ENCODE measurements at regions of chr1 and their contacts with region 1.

Region 1: GRCh38 chr1:182699393-182700350 is 15.3 kb upstream of the RGS8 start:
- DNase-seq: peak; percentile 88
- ATAC-seq: peak; percentile 93
- H3K4me3 Mint-ChIP-seq: peak overlapping the region; percentile 65
- H3K27ac Mint-ChIP-seq: peak overlapping the region; percentile 95
- H3K4me1 Mint-ChIP-seq: peaks cover 74% of the 10 kb centered on the region
- H3K27me3 Mint-ChIP-seq: peaks cover 3% of the 10 kb centered on the region; the same call in 1 of the 2 replicates
- CTCF ChIP-seq: no peak

Region 2: GRCh38 chr1:182595641-182596240 is 103.9 kb before region 1 on chr1:
- CTCF ChIA-PET with region 1: interaction called, 48 read pairs
- POLR2A ChIA-PET with region 1: interaction called, 7 read pairs
- DNase-seq: peak; percentile 84
- ATAC-seq: peak; percentile 74
- H3K4me3 Mint-ChIP-seq: no peak overlapping the region
- H3K27ac Mint-ChIP-seq: no peak overlapping the region
- H3K4me1 Mint-ChIP-seq: peaks cover 7% of the 10 kb centered on the region; the same call in 1 of the 2 replicates
- H3K27me3 Mint-ChIP-seq: no peaks in the 10 kb centered on the region
- CTCF ChIP-seq: peak; percentile 70

Region 3: GRCh38 chr1:182604169-182605164 is 95.2 kb before region 1 on chr1 and contains the start of gene RGS16:
- CTCF ChIA-PET with region 1: interaction called, 48 read pairs
- POLR2A ChIA-PET with region 1: interaction called, 7 read pairs
- DNase-seq: peak; percentile 96
- ATAC-seq: peak; percentile 92
- H3K4me3 Mint-ChIP-seq: no peak within 1 kb of the TSS
- H3K27ac Mint-ChIP-seq: no peak within 1 kb of the TSS
- H3K4me1 Mint-ChIP-seq: peaks cover 11% of the 10 kb centered on the region
- H3K27me3 Mint-ChIP-seq: peaks cover 39% of the 10 kb centered on the region
- CTCF ChIP-seq: no peak
- total RNA-seq, gene RGS16: 9.9 to 17.8 TPM (median 10.2 TPM) in 3 replicates

Region 4: DNA sequence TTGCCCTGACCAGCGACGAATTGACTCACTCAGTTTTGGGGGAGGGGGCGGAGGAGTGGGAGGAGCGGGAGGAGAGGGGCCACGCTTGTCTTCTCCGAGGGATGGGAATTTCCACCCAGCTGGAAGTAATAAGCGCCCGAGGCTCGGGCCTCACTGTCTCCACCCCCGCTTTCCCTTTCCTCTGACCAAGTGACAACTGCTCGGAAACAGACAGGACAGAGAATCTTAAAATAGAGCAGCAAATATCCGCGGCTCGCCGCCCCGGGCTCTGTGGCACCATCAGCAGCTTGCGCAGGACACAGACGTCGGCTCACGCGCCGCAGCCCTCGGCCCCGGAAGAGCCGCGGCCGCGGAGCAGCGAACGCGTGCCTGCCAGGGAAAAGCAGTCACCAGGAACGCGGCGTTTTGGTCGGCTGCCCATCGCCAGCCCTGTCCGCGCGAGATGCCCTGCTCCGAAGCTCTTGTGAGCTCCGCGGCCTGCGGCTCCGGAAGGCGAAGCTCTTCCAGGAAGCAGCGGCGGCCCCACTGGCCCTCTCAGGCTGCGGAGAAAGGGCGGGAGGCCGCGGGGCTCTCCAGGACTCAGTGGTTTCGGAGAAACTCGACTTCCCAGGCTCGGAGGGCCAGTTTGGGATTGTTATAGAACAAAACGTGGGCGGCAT is 84.7 kb before region 1 on chr1:
- CTCF ChIA-PET with region 1: interaction called, 24 read pairs
- POLR2A ChIA-PET with region 1: interaction called, 15 read pairs
- DNase-seq: peak; percentile 55
- ATAC-seq: peak; percentile 24
- H3K4me3 Mint-ChIP-seq: peak overlapping the region; percentile 71
- H3K27ac Mint-ChIP-seq: peak overlapping the region; percentile 86
- H3K4me1 Mint-ChIP-seq: peaks cover 81% of the 10 kb centered on the region
- H3K27me3 Mint-ChIP-seq: peaks cover 67% of the 10 kb centered on the region
- CTCF ChIP-seq: no peak

Region 5: DNA sequence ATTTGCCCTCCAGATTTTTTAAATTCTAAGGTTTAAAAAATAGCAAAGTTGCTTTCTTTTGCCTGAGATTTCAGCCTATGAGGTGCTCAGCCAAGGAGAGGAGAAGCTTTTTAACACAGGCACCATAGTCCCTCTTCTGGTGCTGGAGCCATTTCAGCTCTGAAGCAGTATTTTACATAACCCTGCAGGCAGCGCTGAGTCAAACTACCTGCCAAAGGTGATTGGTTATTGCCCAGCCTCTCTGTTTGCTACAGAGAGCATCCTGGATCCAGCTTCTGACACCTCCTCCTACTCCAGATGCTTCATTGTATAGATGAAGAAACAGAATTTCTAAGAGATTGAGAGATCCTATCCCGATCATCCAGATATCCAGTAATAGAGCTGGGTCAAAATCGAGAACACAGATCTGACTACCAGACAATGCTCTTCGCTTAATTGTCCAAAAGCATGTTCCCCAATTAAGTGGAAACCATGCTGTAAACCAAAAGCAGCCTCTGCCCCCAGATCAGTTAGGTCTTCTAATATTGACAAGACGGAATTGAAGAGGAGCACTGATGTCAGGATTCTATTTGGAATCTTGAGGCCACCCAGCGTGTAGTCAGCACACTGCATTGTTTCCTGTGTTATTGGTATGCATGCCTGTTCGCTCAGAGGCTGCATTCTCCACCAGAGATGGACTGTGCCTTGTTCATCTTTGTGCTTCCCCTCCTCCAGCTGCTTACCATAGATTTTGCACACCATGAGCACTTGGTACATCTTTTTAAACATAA is 37.4 kb before region 1 on chr1:
- CTCF ChIA-PET with region 1: interaction called, 10 read pairs
- POLR2A ChIA-PET with region 1: no interaction called
- DNase-seq: peak; percentile 31
- ATAC-seq: peak; percentile 79
- H3K4me3 Mint-ChIP-seq: peak overlapping the region; percentile 34
- H3K27ac Mint-ChIP-seq: peak overlapping the region; percentile 71
- H3K4me1 Mint-ChIP-seq: peaks cover 60% of the 10 kb centered on the region
- H3K27me3 Mint-ChIP-seq: peaks cover 19% of the 10 kb centered on the region
- CTCF ChIP-seq: no peak

Region 6: DNA sequence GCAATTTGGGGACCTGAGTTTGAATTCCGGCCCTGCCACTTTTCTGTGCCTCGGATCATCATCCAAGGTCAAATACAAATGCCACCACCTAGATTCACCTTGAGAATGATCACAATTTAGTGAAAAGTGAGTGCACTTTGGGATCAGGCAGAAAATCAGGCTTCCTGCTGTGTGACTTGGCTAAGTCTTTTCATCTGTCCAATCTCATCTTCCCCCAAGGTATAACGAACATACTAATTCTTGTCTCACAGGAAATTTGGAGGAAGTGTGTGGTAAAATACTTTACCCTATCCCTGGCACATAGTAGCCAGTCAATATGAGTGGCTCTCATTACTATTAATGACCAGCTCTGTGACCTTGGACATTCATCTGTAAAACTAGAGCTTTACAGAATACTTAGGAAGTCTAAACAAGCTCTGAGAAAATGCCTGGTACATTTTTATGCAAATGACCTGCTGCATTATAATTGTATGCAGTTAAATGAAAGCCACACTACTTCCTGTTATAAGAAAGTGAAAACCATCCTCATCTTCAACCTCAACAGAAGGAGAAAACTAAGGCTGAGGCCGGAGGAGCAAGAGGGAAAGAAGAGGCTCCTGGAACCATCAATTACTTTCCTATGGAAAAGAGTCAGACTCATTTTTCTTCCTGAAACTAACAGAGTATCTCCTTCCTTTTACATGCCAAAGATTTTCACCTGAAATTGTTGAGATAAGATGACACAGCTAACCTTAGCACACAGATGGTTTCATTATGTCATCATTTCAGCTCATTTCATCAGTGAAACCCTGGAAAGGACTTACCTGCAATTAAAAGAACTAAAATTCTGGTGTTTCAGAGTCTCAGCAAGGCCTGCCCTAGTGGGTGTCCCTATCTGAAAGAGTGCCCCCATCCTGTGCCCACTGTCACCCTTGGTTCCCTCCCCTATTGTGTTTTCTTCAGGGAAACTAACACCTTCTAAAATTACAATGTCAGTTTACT is 17.4 kb after region 1 on chr1:
- CTCF ChIA-PET with region 1: interaction called, 14 read pairs
- POLR2A ChIA-PET with region 1: no interaction called
- DNase-seq: no peak
- ATAC-seq: no peak
- H3K4me3 Mint-ChIP-seq: no peak overlapping the region
- H3K27ac Mint-ChIP-seq: no peak overlapping the region
- H3K4me1 Mint-ChIP-seq: peaks cover 9% of the 10 kb centered on the region
- H3K27me3 Mint-ChIP-seq: no peaks in the 10 kb centered on the region
- CTCF ChIP-seq: no peak